Activated T-helper 2 cell treated with anti-CD3 and anti-CD28 coated beads, Interferon-gamma antibody, Interleukin-2, Interleukin-4, amounts not matched to agents 10 μg/mL and 5 μg/mL and 100 μg/mL, durations not matched to agents 14 hours and 24 hours and 36 hours (primary cell): ENCODE measurements at regions of chr14 and their contacts with region 1.

Region 1: GRCh38 chr14:30521899-30522736 is 36.8 kb upstream of the G2E3 start:
- DNase-seq: no peak
- H3K4me3 Mint-ChIP-seq: no peak overlapping the region
- H3K27ac Mint-ChIP-seq: no peak overlapping the region
- H3K4me1 Mint-ChIP-seq: peaks cover 8% of the 10 kb centered on the region
- H3K27me3 Mint-ChIP-seq: no peaks in the 10 kb centered on the region

Region 2: GRCh38 chr14:30375296-30375892 is 146.7 kb before region 1 on chr14:
- intact Hi-C with region 1: loop called (anchors 1 kb)
- DNase-seq: peak; percentile 40
- H3K4me3 Mint-ChIP-seq: no peak overlapping the region
- H3K27ac Mint-ChIP-seq: no peak overlapping the region
- H3K4me1 Mint-ChIP-seq: no peaks in the 10 kb centered on the region
- H3K27me3 Mint-ChIP-seq: peaks cover 17% of the 10 kb centered on the region